Common myeloid progenitor, CD34-positive (primary cell): ENCODE measurements at regions of chr14 and their contacts with region 1.

Region 1: DNA sequence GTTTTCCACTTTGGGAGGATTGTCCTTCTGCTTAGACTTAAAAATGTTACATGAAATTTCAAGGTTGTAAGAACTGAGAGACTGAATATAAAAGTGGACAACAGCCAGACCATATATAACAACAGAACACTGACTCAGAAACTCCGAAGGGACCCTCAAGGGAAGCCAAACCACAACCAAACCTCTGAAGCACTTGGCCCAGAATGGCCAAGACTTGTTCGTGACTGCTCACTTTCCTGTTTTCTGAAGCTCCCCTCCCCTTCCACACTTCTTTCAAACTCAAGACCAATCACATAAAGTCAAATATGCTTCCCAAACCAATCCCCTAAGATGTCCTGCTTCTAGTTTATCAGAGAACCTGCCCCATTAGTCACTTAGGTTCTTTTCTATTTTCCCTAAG is 13.7 kb downstream of the OR6J1 start:
- DNase-seq: no peak
- H3K4me3 ChIP-seq: no peak overlapping the region
- H3K27ac ChIP-seq: no peak overlapping the region
- H3K4me1 ChIP-seq: no peaks in the 10 kb centered on the region
- H3K27me3 ChIP-seq: no peaks in the 10 kb centered on the region

Region 2: DNA sequence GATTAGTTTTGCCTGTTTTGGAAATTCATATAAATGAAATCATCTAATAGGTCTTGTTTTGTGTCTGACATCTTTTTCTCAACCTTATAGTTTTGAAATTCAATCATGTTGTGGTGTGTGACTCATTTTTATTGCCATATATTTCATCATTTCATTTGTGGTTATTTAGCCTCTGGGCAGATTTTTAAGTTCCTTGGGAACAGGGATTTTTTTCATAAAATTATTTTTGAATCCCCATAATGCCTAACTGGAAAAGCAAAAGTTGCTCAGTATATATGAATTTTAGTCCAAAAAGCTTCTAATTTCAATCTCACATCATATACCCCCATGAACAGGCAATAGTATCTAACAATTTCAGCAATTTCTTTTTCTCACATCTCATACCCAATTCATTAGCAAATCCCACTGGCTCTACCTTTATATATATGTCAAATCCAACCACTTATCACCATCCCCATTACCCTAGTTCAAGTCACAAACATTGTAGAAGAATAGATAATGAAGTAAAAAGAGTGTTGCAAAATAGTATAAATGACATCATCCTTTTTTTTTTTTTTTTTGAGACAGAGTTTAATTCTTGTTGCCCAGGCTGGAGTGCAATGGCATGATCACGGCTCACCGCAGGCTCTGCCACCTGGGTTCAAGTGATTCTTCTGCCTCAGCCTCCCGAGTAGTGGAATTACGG is 16.2 kb after region 1 on chr14:
- CTCF ChIA-PET with region 1: interaction called, 13 read pairs
- POLR2A ChIA-PET with region 1: no interaction called
- DNase-seq: peak in 2 of 3 donors; percentile 17 to 21
- H3K4me3 ChIP-seq: no peak overlapping the region
- H3K27ac ChIP-seq: no peak overlapping the region
- H3K4me1 ChIP-seq: peaks cover 0 to 2% (median 0%) of the 10 kb centered on the region in 4 experiments
- H3K27me3 ChIP-seq: peaks cover 0 to 2% (median 0%) of the 10 kb centered on the region in 5 experiments